ENCODE measurements at regions of chr3 and their contacts with region 1.

Region 1: GRCh38 chr3:141498598-141499223 is 11.9 kb downstream of the RASA2 start:
- DNase-seq: peak; percentile 81
- ATAC-seq: peak; percentile 87
- H3K4me3 Mint-ChIP-seq: peak overlapping the region; percentile 82
- H3K27ac Mint-ChIP-seq: peak overlapping the region; percentile 95
- H3K4me1 Mint-ChIP-seq: peaks cover 65% of the 10 kb centered on the region
- H3K27me3 Mint-ChIP-seq: no peaks in the 10 kb centered on the region

Region 2: GRCh38 chr3:141311496-141312353 is 187.0 kb before region 1 on chr3:
- POLR2A ChIA-PET with region 1: no interaction called
- DNase-seq: peak; percentile 96
- ATAC-seq: peak; percentile 93
- H3K4me3 Mint-ChIP-seq: peak overlapping the region; percentile 99
- H3K27ac Mint-ChIP-seq: peak overlapping the region; percentile 100
- H3K4me1 Mint-ChIP-seq: peaks cover 48% of the 10 kb centered on the region
- H3K27me3 Mint-ChIP-seq: no peaks in the 10 kb centered on the region

Region 3: DNA sequence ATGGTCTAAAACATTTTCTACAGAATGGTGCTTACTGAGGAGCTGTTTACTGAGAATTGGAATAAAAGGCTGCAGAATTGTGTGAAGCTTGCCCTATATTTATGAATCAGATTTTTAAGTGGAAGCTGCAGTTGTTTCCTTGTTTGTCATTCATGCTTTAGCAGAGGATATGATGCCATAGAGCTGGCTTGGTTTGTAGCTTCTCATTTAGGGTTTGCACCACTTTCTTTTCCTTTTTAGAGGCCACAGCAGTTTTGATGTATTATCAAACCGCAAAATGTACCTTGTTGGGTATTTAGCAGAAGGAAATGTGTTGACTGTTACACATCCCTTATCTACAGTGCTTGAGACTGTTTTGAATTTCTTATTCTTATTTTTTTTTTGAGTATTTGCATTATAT is 54.3 kb after region 1 on chr3:
- POLR2A ChIA-PET with region 1: interaction called, 26 read pairs
- DNase-seq: no peak
- ATAC-seq: peak; percentile 85
- H3K4me3 Mint-ChIP-seq: peak overlapping the region; percentile 69
- H3K27ac Mint-ChIP-seq: peak overlapping the region; percentile 90
- H3K4me1 Mint-ChIP-seq: peaks cover 42% of the 10 kb centered on the region
- H3K27me3 Mint-ChIP-seq: no peaks in the 10 kb centered on the region